Activated CD4-positive, alpha-beta T cell treated with anti-CD3 and anti-CD28 coated beads, Interleukin-2, amount 10 ng/mL, durations not matched to agents 7 days and 5 days (primary cell): ENCODE measurements at regions of chr5 and their contacts with region 1.

Region 1: DNA sequence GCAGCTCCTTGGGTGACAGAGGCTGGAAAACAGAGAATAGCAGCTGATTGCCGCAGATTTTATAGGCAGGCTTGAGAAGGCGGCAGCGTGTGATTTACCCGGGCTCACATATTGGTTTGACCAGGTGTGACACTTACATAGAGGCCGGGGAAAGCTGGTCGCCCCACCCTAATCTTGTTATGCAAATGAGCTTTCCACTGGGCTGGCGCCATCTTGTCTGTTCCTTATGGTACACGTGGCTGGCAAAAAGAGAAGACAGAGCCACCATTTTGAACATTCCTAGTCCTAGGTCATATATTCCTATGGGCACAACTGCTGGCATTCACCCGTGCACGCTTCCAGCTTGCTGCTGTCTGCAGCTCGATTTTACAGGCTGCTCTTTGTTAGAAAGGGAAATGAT is 11.3 kb upstream of the SPZ1 start:
- DNase-seq: no peak
- H3K4me3 Mint-ChIP-seq: no peak overlapping the region
- H3K27ac Mint-ChIP-seq: no peak overlapping the region
- H3K4me1 Mint-ChIP-seq: no peaks in the 10 kb centered on the region
- H3K27me3 Mint-ChIP-seq: no peaks in the 10 kb centered on the region

Region 2: DNA sequence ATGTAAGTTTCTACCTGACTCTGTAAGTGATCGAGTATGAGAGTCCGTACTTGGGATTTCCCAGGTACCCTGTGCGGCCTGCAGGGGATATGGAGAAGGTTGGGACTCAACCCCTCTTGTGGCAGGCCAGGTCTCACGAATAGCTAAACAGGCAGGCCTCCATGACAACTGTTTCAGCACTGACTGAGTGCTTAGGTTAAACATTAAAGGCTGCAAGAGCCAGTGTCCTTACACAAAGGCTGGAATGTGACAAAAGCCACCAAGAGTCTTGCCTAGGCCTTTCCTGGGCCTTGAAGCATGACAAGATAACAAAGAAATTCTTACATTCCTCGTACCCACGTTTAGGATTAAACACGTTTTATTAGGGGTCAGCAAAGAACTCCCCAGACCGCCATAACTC is 214.7 kb before region 1 on chr5:
- CTCF ChIA-PET with region 1: interaction called, 67 read pairs
- POLR2A ChIA-PET with region 1: no interaction called
- DNase-seq: no peak
- H3K4me3 Mint-ChIP-seq: no peak overlapping the region
- H3K27ac Mint-ChIP-seq: peak overlapping the region; percentile 88
- H3K4me1 Mint-ChIP-seq: peaks cover 34% of the 10 kb centered on the region
- H3K27me3 Mint-ChIP-seq: no peaks in the 10 kb centered on the region

Region 3: DNA sequence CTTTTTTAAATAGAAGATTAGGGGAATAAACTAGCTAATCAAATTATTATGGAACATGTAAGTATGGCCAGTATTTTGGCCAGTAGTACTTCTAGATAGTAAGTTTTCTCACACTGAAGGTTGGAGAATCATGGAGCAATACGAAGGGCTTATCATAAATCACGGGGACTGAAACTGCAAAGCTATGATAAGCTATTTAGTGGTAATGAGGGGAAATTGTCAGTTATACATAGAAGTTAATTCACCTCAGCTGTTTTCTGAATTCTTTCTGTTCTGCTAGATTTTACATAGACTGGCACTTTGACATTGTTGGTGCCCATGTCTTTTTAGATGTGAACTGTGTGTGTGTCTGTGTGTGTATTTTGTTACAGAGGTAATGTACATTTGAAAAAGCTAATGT is 144.8 kb after region 1 on chr5:
- CTCF ChIA-PET with region 1: no interaction called
- POLR2A ChIA-PET with region 1: no interaction called
- DNase-seq: no peak
- H3K4me3 Mint-ChIP-seq: no peak overlapping the region
- H3K27ac Mint-ChIP-seq: no peak overlapping the region
- H3K4me1 Mint-ChIP-seq: no peaks in the 10 kb centered on the region
- H3K27me3 Mint-ChIP-seq: no peaks in the 10 kb centered on the region